Right lobe of liver (tissue), 6 donors: ENCODE measurements at regions of chr6 and their contacts with region 1.

Region 1: DNA sequence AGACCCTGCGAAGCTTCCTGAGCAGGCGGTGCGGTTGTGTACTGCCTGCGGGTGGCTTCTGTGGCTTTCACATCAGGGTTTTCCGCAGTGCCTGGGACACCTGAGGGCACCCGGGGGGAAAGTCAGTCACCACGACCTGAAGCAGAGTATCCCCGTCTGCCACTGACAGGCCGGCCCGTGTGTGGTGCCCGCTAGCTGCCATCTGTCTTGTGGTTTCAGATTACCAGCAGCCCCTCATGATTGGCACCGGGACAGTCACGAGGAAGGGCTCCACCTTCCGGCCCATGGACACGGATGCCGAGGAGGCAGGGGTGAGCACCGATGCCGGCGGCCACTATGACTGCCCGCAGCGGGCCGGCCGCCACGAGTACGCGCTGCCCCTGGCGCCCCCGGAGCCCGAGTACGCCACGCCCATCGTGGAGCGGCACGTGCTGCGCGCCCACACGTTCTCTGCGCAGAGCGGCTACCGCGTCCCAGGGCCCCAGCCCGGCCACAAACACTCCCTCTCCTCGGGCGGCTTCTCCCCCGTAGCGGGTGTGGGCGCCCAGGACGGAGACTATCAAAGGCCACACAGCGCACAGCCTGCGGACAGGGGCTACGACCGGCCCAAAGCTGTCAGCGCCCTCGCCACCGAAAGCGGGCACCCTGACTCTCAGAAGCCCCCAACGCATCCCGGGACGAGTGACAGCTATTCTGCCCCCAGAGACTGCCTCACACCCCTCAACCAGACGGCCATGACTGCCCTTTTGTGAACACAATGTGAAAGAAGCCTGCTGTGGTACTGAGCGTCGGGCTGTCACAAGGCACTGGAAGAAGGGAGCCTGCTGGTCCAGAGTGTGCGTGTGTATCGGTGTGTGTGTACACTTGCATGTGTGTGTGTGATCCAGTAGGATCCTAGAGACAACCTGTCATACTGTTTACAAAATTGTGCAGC is 54.4 kb downstream of the GOPC start:
- DNase-seq: peak; percentile 45 to 61 (median 52)
- ATAC-seq: peak; percentile 19 to 62 (median 46)
- H3K4me3 ChIP-seq: peak overlapping the region in 1 of 3 donors; percentile 42
- H3K27ac ChIP-seq: peak overlapping the region in 1 of 3 donors; percentile 9
- H3K4me1 ChIP-seq: peaks cover 0 to 9% (median 4%) of the 10 kb centered on the region in 4 donors
- H3K27me3 ChIP-seq: no peaks in the 10 kb centered on the region
- CTCF ChIP-seq: peak in 1 of 4 donors; percentile 15
- POLR2A ChIP-seq: no peak

Region 2: DNA sequence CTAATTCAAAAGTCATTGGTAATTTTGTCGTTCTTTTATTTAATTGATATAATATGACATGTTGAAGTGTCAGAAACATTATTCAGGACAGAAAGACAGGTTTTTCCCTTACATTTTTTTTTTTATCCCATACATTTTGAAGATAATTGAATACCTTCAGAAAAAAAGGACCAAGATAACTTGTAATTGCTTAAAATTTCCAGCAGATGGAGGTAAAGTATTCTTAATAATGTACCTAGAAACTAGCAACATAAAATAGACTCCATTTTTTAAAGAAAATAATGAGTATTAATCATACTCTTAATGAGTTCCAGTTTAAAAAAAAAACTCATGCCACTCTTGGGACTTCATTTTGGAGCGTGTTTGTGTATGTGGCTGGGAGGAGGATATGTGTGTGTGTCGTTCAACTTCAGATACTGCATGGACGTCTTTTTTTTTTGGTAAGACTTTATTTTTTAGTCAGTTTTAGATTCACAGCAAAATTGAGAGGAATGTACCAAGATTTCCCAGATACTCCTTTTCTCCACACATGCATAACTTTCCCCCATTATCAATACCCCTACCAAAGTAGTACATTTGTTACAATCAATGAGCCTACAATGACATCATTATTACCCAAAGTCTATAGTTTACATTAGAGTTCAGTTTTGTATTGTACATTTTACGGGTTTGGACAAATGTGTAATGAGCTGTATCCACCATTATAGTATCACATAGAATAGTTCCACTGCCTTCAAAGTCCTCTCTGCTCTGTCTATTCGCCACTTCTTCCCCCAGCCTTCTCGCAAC is 201.6 kb before region 1 on chr6:
- intact Hi-C with region 1: loop called in 1 of 2 experiments (anchors 5 kb)
- DNase-seq: no peak
- ATAC-seq: peak; percentile 31 to 74 (median 65)
- H3K4me3 ChIP-seq: no peak overlapping the region
- H3K27ac ChIP-seq: no peak overlapping the region
- H3K4me1 ChIP-seq: no peaks in the 10 kb centered on the region
- H3K27me3 ChIP-seq: no peaks in the 10 kb centered on the region
- CTCF ChIP-seq: peak; percentile 51 to 58 (median 54)
- POLR2A ChIP-seq: no peak

Region 3: GRCh38 chr6:117482240-117483003 is 65.5 kb before region 1 on chr6 and contains the start of gene DCBLD1:
- intact Hi-C with region 1: loop called (anchors 5 to 10 kb)
- DNase-seq: peak; percentile 86 to 89 (median 87)
- ATAC-seq: peak; percentile 77 to 86 (median 82)
- H3K4me3 ChIP-seq: peak within 1 kb of the TSS; percentile 64 to 80 (median 67)
- H3K27ac ChIP-seq: peak within 1 kb of the TSS; percentile 77 to 82 (median 80)
- H3K4me1 ChIP-seq: peaks cover 0 to 25% (median 12%) of the 10 kb centered on the region in 4 donors
- H3K27me3 ChIP-seq: no peaks in the 10 kb centered on the region
- CTCF ChIP-seq: peak in 2 of 4 donors; percentile 8 to 13
- POLR2A ChIP-seq: peak; percentile 94
- total RNA-seq, gene DCBLD1: 7.6 to 22.8 (median 10.8) TPM

Region 4: GRCh38 chr6:117605169-117605826 is 57.3 kb after region 1 on chr6:
- intact Hi-C with region 1: no loop called
- DNase-seq: peak in 1 of 3 donors; percentile 55
- ATAC-seq: peak; percentile 42 to 63 (median 51)
- H3K4me3 ChIP-seq: no peak overlapping the region
- H3K27ac ChIP-seq: no peak overlapping the region
- H3K4me1 ChIP-seq: peaks cover 0 to 13% (median 0%) of the 10 kb centered on the region in 4 donors
- H3K27me3 ChIP-seq: no peaks in the 10 kb centered on the region
- CTCF ChIP-seq: peak; percentile 67 to 79 (median 70)
- POLR2A ChIP-seq: no peak

Region 5: GRCh38 chr6:117642976-117643375 is 95.0 kb after region 1 on chr6:
- intact Hi-C with region 1: no loop called
- DNase-seq: no peak
- ATAC-seq: no peak
- H3K4me3 ChIP-seq: no peak overlapping the region
- H3K27ac ChIP-seq: no peak overlapping the region
- H3K4me1 ChIP-seq: no peaks in the 10 kb centered on the region
- H3K27me3 ChIP-seq: no peaks in the 10 kb centered on the region
- CTCF ChIP-seq: no peak
- POLR2A ChIP-seq: no peak